ENCODE measurements at regions of chr6 and their contacts with region 1.

Region 1: DNA sequence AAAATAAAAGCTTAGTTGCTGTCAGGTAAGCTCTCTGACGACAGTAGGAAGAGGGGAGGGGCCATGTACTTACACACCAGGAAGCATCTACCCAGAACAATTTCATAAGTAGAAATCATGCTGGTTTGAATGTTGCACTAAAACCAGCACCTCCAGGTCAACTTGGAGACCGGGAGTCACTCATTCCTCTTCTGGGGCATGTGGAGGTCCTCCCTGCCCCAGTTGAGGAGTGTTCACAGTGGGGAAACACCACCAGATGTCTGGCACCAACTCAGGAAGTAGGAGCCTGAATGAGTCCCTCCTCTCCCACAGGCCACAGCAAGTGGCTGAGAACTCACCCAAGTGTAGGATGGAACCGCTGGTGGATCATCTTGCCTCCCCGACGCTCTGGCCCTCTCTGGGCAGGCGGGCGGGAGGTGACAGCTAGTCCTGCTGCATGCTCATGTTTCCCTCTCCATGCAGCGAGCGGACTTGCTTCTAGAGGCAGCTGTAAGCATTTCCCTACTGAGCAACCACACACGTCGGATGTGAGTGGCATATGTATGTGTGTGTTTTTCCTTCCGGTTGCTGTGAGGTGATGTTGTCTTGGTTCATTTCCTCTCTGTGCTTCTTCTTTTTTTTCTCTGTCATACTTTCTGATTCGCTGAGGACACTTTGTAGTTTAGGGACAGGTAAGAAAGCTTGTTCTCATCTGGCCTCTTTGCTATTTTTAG is 149.5 kb upstream of the NEDD9 start:
- DNase-seq: peak; percentile 92
- ATAC-seq: peak; percentile 77
- H3K4me3 ChIP-seq: peak overlapping the region; percentile 72
- H3K27ac ChIP-seq: peak overlapping the region; percentile 90
- H3K4me1 ChIP-seq: peaks cover 24% of the 10 kb centered on the region
- H3K27me3 ChIP-seq: no peaks in the 10 kb centered on the region
- CTCF ChIP-seq: no peak
- EP300 ChIP-seq: no peak; a peak in 1 of 4 replicates
- POLR2A ChIP-seq: peak; percentile 92
- RAD21 ChIP-seq: 0 out of 2 replicates have a peak, but pooled peaks have one; percentile 5

Region 2: GRCh38 chr6:11224252-11224965 is 157.5 kb before region 1 on chr6:
- CTCF ChIA-PET with region 1: interaction called, 6 read pairs
- POLR2A ChIA-PET with region 1: interaction called, 3 read pairs
- RAD21 ChIA-PET with region 1: interaction called, 5 read pairs
- SMC1A ChIA-PET with region 1: interaction called, 56 read pairs
- in situ Hi-C with region 1: no loop called
- intact Hi-C with region 1: no loop called
- DNase-seq: peak; percentile 43
- ATAC-seq: peak; percentile 82
- H3K4me3 ChIP-seq: no peak overlapping the region
- H3K27ac ChIP-seq: 0 out of 2 replicates have a peak overlapping the region, but pooled peaks have one; percentile 25
- H3K4me1 ChIP-seq: peaks cover 21% of the 10 kb centered on the region
- H3K27me3 ChIP-seq: no peaks in the 10 kb centered on the region
- CTCF ChIP-seq: no peak
- EP300 ChIP-seq: no peak
- POLR2A ChIP-seq: no peak
- RAD21 ChIP-seq: 0 out of 2 replicates have a peak, but pooled peaks have one; percentile 6

Region 3: DNA sequence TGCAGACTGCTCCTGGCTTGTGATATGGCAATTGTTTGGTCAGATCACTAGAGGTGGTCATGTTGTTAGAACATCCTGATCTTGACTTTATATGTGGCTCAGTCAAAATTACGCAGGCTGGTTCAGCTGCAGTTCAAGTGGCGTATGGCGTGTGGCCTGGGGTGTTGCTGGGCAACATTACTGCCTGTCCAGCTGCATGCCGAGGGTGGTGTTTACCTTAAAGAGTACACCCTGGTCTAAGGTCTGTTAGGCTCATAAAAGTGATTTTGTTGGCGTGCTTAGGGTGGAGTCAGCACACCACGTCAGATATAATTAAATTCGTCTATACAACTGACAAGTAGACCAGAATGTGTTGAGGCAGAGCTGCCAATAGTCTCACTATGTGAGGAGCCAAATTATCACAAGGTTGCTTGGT is 93.9 kb before region 1 on chr6:
- CTCF ChIA-PET with region 1: no interaction called
- POLR2A ChIA-PET with region 1: no interaction called
- RAD21 ChIA-PET with region 1: interaction called, 4 read pairs
- SMC1A ChIA-PET with region 1: interaction called, 10 read pairs
- in situ Hi-C with region 1: no loop called
- intact Hi-C with region 1: no loop called
- DNase-seq: no peak
- ATAC-seq: no peak
- H3K4me3 ChIP-seq: no peak overlapping the region
- H3K27ac ChIP-seq: no peak overlapping the region
- H3K4me1 ChIP-seq: no peaks in the 10 kb centered on the region; the same call in 1 of the 2 replicates
- H3K27me3 ChIP-seq: no peaks in the 10 kb centered on the region
- CTCF ChIP-seq: no peak
- EP300 ChIP-seq: no peak
- POLR2A ChIP-seq: no peak
- RAD21 ChIP-seq: no peak

Region 4: GRCh38 chr6:11353921-11354389 is 28.0 kb before region 1 on chr6:
- CTCF ChIA-PET with region 1: interaction called, 6 read pairs
- POLR2A ChIA-PET with region 1: interaction called, 3 read pairs
- RAD21 ChIA-PET with region 1: interaction called, 221 read pairs
- SMC1A ChIA-PET with region 1: interaction called, 275 read pairs
- in situ Hi-C with region 1: no loop called
- intact Hi-C with region 1: no loop called
- DNase-seq: no peak
- ATAC-seq: peak; percentile 85
- H3K4me3 ChIP-seq: no peak overlapping the region
- H3K27ac ChIP-seq: peak overlapping the region; percentile 43
- H3K4me1 ChIP-seq: peaks cover 13% of the 10 kb centered on the region
- H3K27me3 ChIP-seq: no peaks in the 10 kb centered on the region
- CTCF ChIP-seq: no peak
- EP300 ChIP-seq: no peak
- POLR2A ChIP-seq: no peak
- RAD21 ChIP-seq: no peak

Region 5: DNA sequence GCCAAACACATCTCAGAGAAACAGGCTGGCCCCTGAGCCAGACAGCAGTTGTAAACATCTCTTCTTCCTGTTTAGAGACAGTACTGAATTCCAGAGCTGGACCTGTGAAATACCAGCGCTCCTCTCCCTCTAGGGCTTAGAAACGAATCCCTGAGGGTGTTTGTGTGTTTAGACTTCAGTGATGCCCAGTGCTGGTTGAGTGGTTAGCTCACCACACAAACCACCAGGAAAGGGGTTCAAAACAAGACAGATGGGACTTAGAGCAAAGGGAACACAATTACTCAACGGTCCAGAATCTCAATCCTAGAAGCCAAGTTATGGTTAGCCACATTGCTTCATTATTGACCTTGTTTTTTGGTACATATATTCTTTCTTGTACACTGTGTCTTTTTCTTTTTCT is 46.9 kb after region 1 on chr6:
- CTCF ChIA-PET with region 1: interaction called, 8 read pairs
- POLR2A ChIA-PET with region 1: interaction called, 8 read pairs
- RAD21 ChIA-PET with region 1: interaction called, 82 read pairs
- SMC1A ChIA-PET with region 1: interaction called, 190 read pairs
- in situ Hi-C with region 1: no loop called
- intact Hi-C with region 1: loop called (anchors 2 kb)
- DNase-seq: peak; percentile 83
- ATAC-seq: peak; percentile 81
- H3K4me3 ChIP-seq: no peak overlapping the region
- H3K27ac ChIP-seq: peak overlapping the region; percentile 51; the same call in 1 of the 2 replicates
- H3K4me1 ChIP-seq: peaks cover 33% of the 10 kb centered on the region
- H3K27me3 ChIP-seq: no peaks in the 10 kb centered on the region
- CTCF ChIP-seq: no peak
- EP300 ChIP-seq: peak in 1 of 2 experiments; percentile 65; a peak in 2 of 4 replicates
- POLR2A ChIP-seq: no peak
- RAD21 ChIP-seq: no peak

Region 6: DNA sequence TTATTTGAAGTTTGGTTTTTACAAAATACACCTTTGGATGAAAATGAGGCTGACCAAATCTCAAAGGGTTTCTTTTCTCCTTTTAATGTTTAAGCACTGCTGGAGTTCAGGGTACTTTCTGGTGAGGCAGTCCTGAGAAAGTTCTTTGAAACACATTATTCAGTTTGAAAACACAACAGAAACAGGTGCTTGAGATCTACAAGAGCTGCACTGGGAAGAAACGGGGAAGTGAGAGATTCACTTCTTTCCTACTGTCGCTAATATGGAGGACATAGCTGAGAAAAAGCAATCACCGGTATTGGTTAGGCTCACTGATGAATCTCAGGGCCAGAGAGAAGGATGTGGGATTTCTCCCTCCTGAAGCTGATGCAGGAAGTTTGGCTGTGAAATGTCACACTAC is 132.7 kb after region 1 on chr6:
- CTCF ChIA-PET with region 1: interaction called, 3 read pairs
- POLR2A ChIA-PET with region 1: interaction called, 4 read pairs
- RAD21 ChIA-PET with region 1: interaction called, 18 read pairs
- SMC1A ChIA-PET with region 1: interaction called, 11 read pairs
- in situ Hi-C with region 1: no loop called
- intact Hi-C with region 1: no loop called
- DNase-seq: peak; percentile 87
- ATAC-seq: peak; percentile 87
- H3K4me3 ChIP-seq: no peak overlapping the region
- H3K27ac ChIP-seq: peak overlapping the region; percentile 97
- H3K4me1 ChIP-seq: peaks cover 40% of the 10 kb centered on the region
- H3K27me3 ChIP-seq: no peaks in the 10 kb centered on the region
- CTCF ChIP-seq: no peak
- EP300 ChIP-seq: peak in 1 of 2 experiments; percentile 89; a peak in 1 of 4 replicates
- POLR2A ChIP-seq: no peak
- RAD21 ChIP-seq: no peak

Region 7: GRCh38 chr6:11525468-11526155 is 143.7 kb after region 1 on chr6:
- CTCF ChIA-PET with region 1: no interaction called
- POLR2A ChIA-PET with region 1: no interaction called
- RAD21 ChIA-PET with region 1: no interaction called
- SMC1A ChIA-PET with region 1: no interaction called
- in situ Hi-C with region 1: no loop called
- intact Hi-C with region 1: no loop called
- DNase-seq: no peak
- ATAC-seq: peak; percentile 29; the same call in 1 of the 3 replicates
- H3K4me3 ChIP-seq: no peak overlapping the region
- H3K27ac ChIP-seq: no peak overlapping the region
- H3K4me1 ChIP-seq: no peaks in the 10 kb centered on the region
- H3K27me3 ChIP-seq: no peaks in the 10 kb centered on the region
- CTCF ChIP-seq: no peak
- EP300 ChIP-seq: no peak
- POLR2A ChIP-seq: no peak
- RAD21 ChIP-seq: no peak

Measured in GM12878 (cell line).